ENCODE measurements at regions of chr20 and their contacts with region 1.

Region 1: DNA sequence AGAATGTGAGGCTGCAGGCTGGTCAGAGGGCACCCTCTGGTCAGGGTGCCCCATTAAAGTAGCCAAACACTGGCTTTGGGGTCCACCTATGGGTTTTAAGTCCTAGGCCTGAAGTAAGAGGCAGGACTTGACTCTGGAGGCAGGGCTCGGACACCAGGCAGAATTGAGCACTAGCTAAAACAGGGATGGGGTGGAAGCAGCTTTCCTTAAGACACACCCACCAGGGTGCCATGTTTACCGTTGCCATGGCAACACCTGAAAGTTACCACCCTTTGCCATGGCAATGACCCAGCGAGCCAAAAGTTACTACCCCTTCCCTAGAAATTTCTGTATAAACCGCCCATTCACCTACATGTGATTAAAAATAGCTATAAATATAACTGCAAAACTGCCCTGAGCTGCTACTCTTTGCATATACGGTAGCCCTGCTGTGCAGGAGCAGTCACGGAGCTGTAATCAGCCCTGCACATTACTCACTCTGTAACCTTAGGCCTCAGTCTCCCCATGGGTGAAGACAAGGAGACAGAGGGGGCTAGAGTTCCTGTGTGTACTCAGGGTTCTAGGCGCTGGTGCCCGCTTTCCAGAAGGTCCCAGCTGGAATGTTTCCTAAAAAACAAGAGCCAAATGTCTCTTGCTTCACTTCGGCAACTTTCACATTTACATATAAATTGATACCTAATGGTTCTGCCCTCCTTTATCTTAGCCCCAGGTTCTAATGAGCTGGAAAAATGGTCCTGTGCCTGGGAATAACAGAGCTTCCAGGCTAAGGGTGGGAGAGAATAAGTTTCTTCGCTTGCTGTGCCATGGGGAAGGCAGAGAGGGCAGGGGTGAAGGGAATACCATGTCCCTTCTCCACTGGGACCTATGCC is 27.2 kb upstream of the SRSF6 start:
- DNase-seq: no peak
- H3K4me3 Mint-ChIP-seq: no peak overlapping the region
- H3K27ac Mint-ChIP-seq: no peak overlapping the region
- H3K4me1 Mint-ChIP-seq: peaks cover 9% of the 10 kb centered on the region
- H3K27me3 Mint-ChIP-seq: peaks cover 58% of the 10 kb centered on the region
- CTCF ChIP-seq: no peak

Region 2: GRCh38 chr20:43442282-43442880 is 11.9 kb after region 1 on chr20:
- CTCF ChIA-PET with region 1: interaction called, 11 read pairs
- POLR2A ChIA-PET with region 1: no interaction called
- intact Hi-C with region 1: no loop called
- DNase-seq: no peak
- H3K4me3 Mint-ChIP-seq: no peak overlapping the region
- H3K27ac Mint-ChIP-seq: no peak overlapping the region
- H3K4me1 Mint-ChIP-seq: no peaks in the 10 kb centered on the region
- H3K27me3 Mint-ChIP-seq: peaks cover 6% of the 10 kb centered on the region
- CTCF ChIP-seq: peak; percentile 20

Measured in MCF 10A (cell line).